ENCODE measurements at regions of chr5 and their contacts with region 1.

Region 1: GRCh38 chr5:39217365-39218281 is 1.7 kb downstream of the FYB1 start:
- DNase-seq: peak; percentile 90
- ATAC-seq: peak; percentile 71
- H3K4me3 Mint-ChIP-seq: peak overlapping the region; percentile 81
- H3K27ac Mint-ChIP-seq: peak overlapping the region; percentile 95
- H3K4me1 Mint-ChIP-seq: peaks cover 62% of the 10 kb centered on the region
- H3K27me3 Mint-ChIP-seq: no peaks in the 10 kb centered on the region
- CTCF ChIP-seq: peak; percentile 91

Region 2: DNA sequence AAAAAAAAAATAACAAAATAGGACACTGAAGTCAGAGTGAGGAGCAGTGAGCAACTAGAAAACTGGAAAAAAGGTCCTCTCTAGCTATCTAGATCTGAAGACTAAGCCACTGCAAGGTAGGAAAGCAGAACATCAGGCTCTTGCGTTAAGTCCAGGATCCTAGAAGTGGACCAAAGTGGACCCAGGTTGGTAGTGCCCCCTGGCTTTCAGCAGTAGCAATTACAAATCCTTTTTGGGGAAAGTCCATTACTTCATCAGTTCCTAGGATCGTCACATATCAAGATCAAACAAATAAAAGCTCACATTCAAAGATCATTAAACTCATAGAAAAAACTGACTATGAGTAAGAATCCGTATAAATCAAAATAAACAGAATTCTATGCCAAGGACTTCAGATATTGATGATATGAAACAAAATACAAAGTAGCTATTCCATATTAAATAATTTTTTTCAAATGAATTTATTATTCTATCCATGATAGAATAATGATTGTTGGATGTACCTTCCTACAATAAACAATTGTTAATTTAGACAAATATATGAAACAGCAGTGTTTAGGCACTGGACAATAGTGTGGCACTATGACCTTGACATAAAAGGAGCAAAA is 136.9 kb before region 1 on chr5:
- CTCF ChIA-PET with region 1: interaction called, 10 read pairs
- POLR2A ChIA-PET with region 1: no interaction called
- intact Hi-C with region 1: no loop called
- DNase-seq: peak; percentile 39
- ATAC-seq: peak; percentile 71
- H3K4me3 Mint-ChIP-seq: no peak overlapping the region
- H3K27ac Mint-ChIP-seq: no peak overlapping the region
- H3K4me1 Mint-ChIP-seq: peaks cover 17% of the 10 kb centered on the region
- H3K27me3 Mint-ChIP-seq: peaks cover 33% of the 10 kb centered on the region
- CTCF ChIP-seq: peak; percentile 89

Region 3: DNA sequence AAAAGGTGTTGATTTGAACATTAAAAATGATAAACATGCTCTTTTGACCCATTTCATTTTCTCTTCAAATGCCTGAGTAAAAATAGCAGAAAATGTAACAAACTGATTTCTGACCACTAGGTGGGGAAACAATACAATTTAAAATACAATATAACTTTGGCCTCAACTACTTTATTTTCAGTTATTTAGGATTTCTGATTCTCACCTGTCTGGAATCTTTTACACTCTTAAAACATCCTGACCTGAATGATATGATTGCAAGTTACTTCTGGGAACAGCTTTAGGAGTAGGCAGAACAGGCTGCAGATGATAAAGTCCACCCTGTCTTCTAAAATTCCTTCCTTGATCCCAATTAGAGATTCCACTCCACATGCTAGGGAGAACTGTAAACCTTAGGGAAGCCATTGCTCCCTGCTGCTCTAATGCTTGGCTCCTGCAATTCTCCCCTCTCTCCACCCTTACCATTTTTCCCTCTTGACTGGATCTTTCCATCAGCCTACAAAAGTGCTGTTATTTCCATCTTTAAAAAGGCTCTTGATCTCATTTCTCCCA is 68.6 kb before region 1 on chr5:
- CTCF ChIA-PET with region 1: interaction called, 31 read pairs
- POLR2A ChIA-PET with region 1: interaction called, 4 read pairs
- intact Hi-C with region 1: no loop called
- DNase-seq: no peak
- ATAC-seq: peak; percentile 45
- H3K4me3 Mint-ChIP-seq: no peak overlapping the region
- H3K27ac Mint-ChIP-seq: peak overlapping the region; percentile 90
- H3K4me1 Mint-ChIP-seq: peaks cover 68% of the 10 kb centered on the region
- H3K27me3 Mint-ChIP-seq: no peaks in the 10 kb centered on the region
- CTCF ChIP-seq: peak; percentile 62

Region 4: GRCh38 chr5:39177631-39177964 is 40.0 kb before region 1 on chr5:
- CTCF ChIA-PET with region 1: interaction called, 14 read pairs
- POLR2A ChIA-PET with region 1: interaction called, 8 read pairs
- intact Hi-C with region 1: loop called (anchors 5 kb)
- DNase-seq: no peak
- ATAC-seq: peak; percentile 16
- H3K4me3 Mint-ChIP-seq: peak overlapping the region; percentile 55
- H3K27ac Mint-ChIP-seq: peak overlapping the region; percentile 89
- H3K4me1 Mint-ChIP-seq: peaks cover 95% of the 10 kb centered on the region
- H3K27me3 Mint-ChIP-seq: no peaks in the 10 kb centered on the region
- CTCF ChIP-seq: no peak

Region 5: GRCh38 chr5:39202597-39203274 is 14.9 kb before region 1 on chr5:
- CTCF ChIA-PET with region 1: interaction called, 61 read pairs
- POLR2A ChIA-PET with region 1: interaction called, 43 read pairs
- intact Hi-C with region 1: no loop called
- DNase-seq: peak; percentile 58
- ATAC-seq: peak; percentile 23
- H3K4me3 Mint-ChIP-seq: peak overlapping the region; percentile 92
- H3K27ac Mint-ChIP-seq: peak overlapping the region; percentile 97
- H3K4me1 Mint-ChIP-seq: peaks cover 36% of the 10 kb centered on the region
- H3K27me3 Mint-ChIP-seq: no peaks in the 10 kb centered on the region
- CTCF ChIP-seq: no peak

Region 6: GRCh38 chr5:39264528-39264927 is 46.9 kb after region 1 on chr5:
- CTCF ChIA-PET with region 1: interaction called, 22 read pairs
- POLR2A ChIA-PET with region 1: interaction called, 6 read pairs
- intact Hi-C with region 1: no loop called
- DNase-seq: peak; percentile 55
- ATAC-seq: peak; percentile 89
- H3K4me3 Mint-ChIP-seq: peak overlapping the region; percentile 35
- H3K27ac Mint-ChIP-seq: peak overlapping the region; percentile 71
- H3K4me1 Mint-ChIP-seq: peaks cover 18% of the 10 kb centered on the region
- H3K27me3 Mint-ChIP-seq: no peaks in the 10 kb centered on the region
- CTCF ChIP-seq: no peak

Region 7: DNA sequence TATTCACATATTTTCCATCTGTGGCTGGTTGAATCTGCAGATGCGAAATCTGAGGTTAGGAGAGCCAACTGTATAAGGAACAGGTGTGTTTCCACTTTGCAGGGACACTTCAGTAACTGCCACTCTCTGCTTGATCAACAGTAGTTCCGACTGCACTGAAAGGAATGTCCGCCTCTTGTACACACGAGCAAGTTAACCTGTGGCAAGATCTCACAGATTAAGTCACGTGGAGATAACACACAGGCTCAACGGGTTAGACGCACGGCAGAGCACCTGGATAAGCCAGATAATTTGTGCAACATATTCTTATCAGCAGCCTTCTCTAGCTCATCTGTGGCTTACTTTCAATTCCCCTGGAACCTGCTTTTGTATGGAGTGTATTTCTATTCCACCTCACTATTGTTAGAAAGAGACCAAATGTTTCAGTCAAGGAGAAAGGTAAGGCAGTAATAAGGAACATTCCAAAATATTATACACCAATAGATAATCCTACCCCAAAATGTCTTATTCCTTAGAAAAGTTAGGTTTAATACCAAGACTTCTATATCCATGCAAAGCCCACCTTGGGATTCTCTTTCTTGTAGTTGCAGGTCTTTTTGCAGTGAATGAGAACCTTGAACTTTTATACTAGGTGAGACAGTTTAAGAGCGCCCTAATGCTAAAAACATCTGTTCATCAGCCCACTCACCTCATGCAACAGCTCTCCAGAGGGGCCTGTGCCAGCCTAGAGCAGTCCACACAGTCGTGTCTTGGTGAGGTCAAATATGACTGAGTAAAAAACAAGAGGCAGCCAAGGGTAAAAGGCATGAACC is 153.1 kb after region 1 on chr5:
- CTCF ChIA-PET with region 1: interaction called, 32 read pairs
- POLR2A ChIA-PET with region 1: no interaction called
- intact Hi-C with region 1: no loop called
- DNase-seq: no peak
- ATAC-seq: no peak
- H3K4me3 Mint-ChIP-seq: no peak overlapping the region
- H3K27ac Mint-ChIP-seq: no peak overlapping the region
- H3K4me1 Mint-ChIP-seq: no peaks in the 10 kb centered on the region
- H3K27me3 Mint-ChIP-seq: peaks cover 1% of the 10 kb centered on the region
- CTCF ChIP-seq: no peak